ENCODE measurements at regions of chr2 and their contacts with region 1.

Region 1: DNA sequence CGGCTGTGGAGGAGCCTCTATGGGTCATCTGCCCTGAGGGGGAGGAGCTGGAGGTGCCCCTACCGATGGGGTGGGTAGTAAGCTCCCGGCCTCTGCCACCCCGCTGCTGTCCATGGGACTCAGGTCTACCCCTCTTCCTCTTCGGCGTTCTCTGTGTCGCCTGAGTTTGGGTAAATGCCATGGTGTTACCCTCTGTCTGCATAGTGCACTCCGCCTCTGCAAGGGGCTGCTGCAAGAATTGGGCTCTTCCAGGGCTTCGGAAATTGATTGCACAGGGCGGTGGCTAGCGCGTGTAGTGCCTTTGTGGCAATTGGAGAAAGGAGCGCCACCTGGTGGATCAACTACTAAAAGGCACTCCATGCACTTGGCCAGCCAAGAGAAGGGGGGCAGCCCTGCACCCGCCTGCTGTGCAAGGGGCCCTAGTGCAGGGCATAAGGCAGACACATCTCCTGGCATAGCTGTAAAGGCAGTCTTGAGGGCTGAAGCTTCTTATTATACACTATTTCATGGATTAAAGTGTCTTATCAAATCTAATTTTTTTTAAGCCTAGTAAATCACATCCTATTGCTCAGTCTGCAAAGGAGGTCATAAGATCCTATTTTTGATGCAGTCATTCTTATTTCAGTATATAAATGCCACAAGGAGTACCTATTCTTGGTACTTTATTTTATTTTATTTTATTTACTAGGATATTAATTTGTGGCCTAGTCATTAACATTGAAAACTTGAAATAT is 308.9 kb downstream of the PDE11A start:
- DNase-seq: peak; percentile 58
- ATAC-seq: peak; percentile 98
- H3K4me3 ChIP-seq: no peak overlapping the region
- H3K27ac ChIP-seq: no peak overlapping the region
- H3K4me1 ChIP-seq: no peaks in the 10 kb centered on the region
- H3K27me3 ChIP-seq: peaks cover 4% of the 10 kb centered on the region; the same call in 1 of the 2 replicates
- CTCF ChIP-seq: peak; percentile 71
- POLR2A ChIP-seq: no peak
- RAD21 ChIP-seq: peak; percentile 55

Region 2: GRCh38 chr2:175844169-175844568 is 1919.5 kb before region 1 on chr2:
- CTCF ChIA-PET with region 1: no interaction called
- POLR2A ChIA-PET with region 1: no interaction called
- dilution Hi-C with region 1: no loop called
- in situ Hi-C with region 1: no loop called
- intact Hi-C with region 1: loop called (anchors 10 kb)
- DNase-seq: peak; percentile 78
- ATAC-seq: peak; percentile 67
- H3K4me3 ChIP-seq: no peak overlapping the region
- H3K27ac ChIP-seq: no peak overlapping the region
- H3K4me1 ChIP-seq: no peaks in the 10 kb centered on the region; the same call in 1 of the 2 replicates
- H3K27me3 ChIP-seq: no peaks in the 10 kb centered on the region
- CTCF ChIP-seq: no peak
- POLR2A ChIP-seq: no peak
- RAD21 ChIP-seq: no peak

Region 3: DNA sequence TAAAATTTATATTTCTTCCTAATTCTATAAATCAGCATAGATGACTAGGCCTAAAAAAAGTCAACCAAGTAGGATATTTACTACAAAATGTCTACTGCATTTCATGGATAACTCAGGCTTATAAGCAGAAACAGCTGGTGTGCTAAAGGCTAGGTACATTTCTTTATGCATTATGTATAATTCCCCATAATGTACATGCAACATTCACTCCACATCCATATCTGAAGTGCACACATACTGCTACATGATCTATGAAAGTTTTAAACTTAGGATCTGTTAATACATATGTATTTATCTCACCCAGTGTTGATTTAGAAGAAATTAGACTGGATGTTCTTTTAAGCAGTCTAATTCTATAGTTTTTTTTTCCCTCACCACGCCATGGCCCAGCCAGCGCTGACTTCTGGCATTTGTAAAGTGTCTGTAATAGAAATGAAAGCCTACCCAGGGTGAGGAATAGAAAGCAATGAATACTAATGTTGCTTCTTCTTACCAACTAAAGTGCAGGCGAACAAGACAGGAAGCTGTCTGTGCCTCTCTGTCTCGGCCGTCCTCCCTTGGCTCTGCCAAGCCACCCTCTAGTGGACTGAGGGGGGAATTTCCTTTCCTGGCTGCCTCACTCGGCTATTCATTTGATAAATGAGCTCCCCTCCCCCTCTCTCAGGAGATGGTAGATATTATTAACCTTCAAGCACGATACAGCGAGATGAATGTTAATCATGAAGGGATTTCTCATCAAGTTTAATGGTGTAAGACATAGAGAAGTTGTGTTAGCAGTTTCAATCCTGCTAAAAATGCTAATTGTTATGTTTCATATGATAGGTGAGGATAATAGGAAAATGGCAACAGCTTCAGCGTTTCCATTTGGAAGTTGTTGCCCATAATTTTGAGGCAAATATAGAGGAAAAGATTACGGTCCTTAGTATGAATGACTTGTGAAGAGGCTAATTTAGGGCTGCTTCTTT is 1109.9 kb before region 1 on chr2:
- CTCF ChIA-PET with region 1: no interaction called
- POLR2A ChIA-PET with region 1: no interaction called
- dilution Hi-C with region 1: no loop called
- in situ Hi-C with region 1: no loop called
- intact Hi-C with region 1: loop called (anchors 10 kb)
- DNase-seq: peak; percentile 55
- ATAC-seq: peak; percentile 86
- H3K4me3 ChIP-seq: no peak overlapping the region
- H3K27ac ChIP-seq: no peak overlapping the region
- H3K4me1 ChIP-seq: no peaks in the 10 kb centered on the region
- H3K27me3 ChIP-seq: no peaks in the 10 kb centered on the region; the same call in 1 of the 2 replicates
- CTCF ChIP-seq: peak; percentile 59
- POLR2A ChIP-seq: no peak
- RAD21 ChIP-seq: no peak; the same call in 1 of the 2 replicates

Region 4: DNA sequence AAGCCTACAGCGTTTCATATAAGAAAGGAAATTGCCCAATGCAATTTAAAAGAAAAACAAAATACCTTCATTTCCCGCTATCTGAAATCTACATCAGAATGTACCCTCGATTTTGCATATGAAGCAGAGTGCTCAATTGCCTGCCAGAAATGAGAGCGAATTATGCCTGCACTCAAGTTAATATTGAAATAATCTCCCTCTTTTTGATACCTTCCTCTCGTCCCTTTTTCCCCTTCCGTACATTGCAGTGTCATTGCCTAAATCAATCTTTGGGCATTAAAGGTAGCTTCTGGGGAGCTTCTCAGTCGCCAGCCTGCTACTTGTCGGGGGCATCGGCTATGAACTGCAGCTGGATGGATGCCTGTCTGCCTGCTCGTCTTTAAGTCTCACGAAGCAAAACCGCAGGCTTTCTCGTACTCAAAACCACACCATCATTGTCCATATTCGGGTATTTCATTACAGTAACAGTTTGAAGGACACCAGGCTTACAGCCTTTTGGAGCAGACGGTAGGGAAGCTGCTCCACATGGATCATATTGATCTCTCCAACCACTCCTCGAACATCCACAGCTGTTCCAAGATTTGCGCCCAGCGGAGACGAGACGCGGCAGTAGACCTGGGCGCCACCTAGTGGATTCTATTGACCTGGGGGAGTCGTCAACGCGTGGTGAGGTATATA is 615.1 kb before region 1 on chr2:
- CTCF ChIA-PET with region 1: no interaction called
- POLR2A ChIA-PET with region 1: no interaction called
- dilution Hi-C with region 1: no loop called
- in situ Hi-C with region 1: no loop called
- intact Hi-C with region 1: loop called (anchors 5 kb)
- DNase-seq: peak; percentile 66
- ATAC-seq: peak; percentile 99
- H3K4me3 ChIP-seq: peak overlapping the region; percentile 71
- H3K27ac ChIP-seq: no peak overlapping the region
- H3K4me1 ChIP-seq: no peaks in the 10 kb centered on the region
- H3K27me3 ChIP-seq: peaks cover 19% of the 10 kb centered on the region
- CTCF ChIP-seq: peak; percentile 80
- POLR2A ChIP-seq: no peak
- RAD21 ChIP-seq: peak; percentile 43

Region 5: DNA sequence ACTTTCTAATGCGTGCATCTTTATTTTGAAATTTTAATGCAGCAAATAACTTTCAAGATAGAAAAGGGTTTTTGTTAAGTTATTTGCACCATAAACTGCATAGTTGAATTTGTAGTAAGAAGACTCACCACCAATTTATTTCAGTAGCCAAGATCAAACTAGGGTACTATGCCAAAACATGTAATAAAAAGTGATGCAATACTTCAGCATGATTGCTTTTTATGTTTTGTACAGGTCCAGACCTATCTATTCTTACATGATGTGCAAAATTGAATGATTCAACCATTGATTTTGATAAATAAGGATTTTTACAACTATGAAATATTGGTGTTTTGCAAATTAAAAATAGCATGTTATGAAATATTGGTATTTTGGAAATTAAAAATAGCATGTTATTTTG is 344.4 kb before region 1 on chr2:
- CTCF ChIA-PET with region 1: no interaction called
- POLR2A ChIA-PET with region 1: no interaction called
- dilution Hi-C with region 1: no loop called
- in situ Hi-C with region 1: no loop called
- intact Hi-C with region 1: loop called (anchors 5 kb)
- DNase-seq: peak; percentile 61
- ATAC-seq: no peak
- H3K4me3 ChIP-seq: no peak overlapping the region
- H3K27ac ChIP-seq: no peak overlapping the region
- H3K4me1 ChIP-seq: no peaks in the 10 kb centered on the region
- H3K27me3 ChIP-seq: no peaks in the 10 kb centered on the region
- CTCF ChIP-seq: no peak
- POLR2A ChIP-seq: no peak
- RAD21 ChIP-seq: no peak

Region 6: GRCh38 chr2:177489719-177490301 is 273.9 kb before region 1 on chr2:
- CTCF ChIA-PET with region 1: no interaction called
- POLR2A ChIA-PET with region 1: no interaction called
- dilution Hi-C with region 1: no loop called
- in situ Hi-C with region 1: no loop called
- intact Hi-C with region 1: loop called (anchors 1 kb)
- DNase-seq: peak; percentile 49
- ATAC-seq: peak; percentile 72
- H3K4me3 ChIP-seq: no peak overlapping the region
- H3K27ac ChIP-seq: no peak overlapping the region
- H3K4me1 ChIP-seq: no peaks in the 10 kb centered on the region
- H3K27me3 ChIP-seq: no peaks in the 10 kb centered on the region
- CTCF ChIP-seq: peak; percentile 67
- POLR2A ChIP-seq: no peak
- RAD21 ChIP-seq: peak; percentile 63

Region 7: DNA sequence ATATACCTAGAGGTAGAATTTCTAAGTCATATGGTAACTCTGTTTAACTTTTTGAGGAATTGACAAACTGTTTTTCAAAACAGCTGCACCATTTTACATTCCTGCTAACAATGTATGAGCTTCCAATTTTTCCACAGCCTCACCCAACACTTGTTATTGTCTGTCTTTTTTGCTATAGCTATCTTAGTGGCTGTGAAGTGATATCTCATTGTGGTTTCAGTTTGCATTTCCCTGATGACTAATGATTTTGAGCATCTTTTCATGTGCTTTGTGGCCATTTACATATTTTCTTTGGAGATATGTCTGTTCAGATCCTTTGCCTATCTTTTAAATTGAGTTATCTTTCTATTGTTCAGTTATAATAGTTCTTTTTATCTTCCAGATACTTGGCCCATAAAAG is 97.3 kb before region 1 on chr2:
- CTCF ChIA-PET with region 1: no interaction called
- POLR2A ChIA-PET with region 1: no interaction called
- dilution Hi-C with region 1: no loop called
- in situ Hi-C with region 1: no loop called
- intact Hi-C with region 1: no loop called
- DNase-seq: peak; percentile 1
- ATAC-seq: no peak
- H3K4me3 ChIP-seq: no peak overlapping the region
- H3K27ac ChIP-seq: no peak overlapping the region
- H3K4me1 ChIP-seq: no peaks in the 10 kb centered on the region
- H3K27me3 ChIP-seq: no peaks in the 10 kb centered on the region
- CTCF ChIP-seq: no peak
- POLR2A ChIP-seq: no peak
- RAD21 ChIP-seq: no peak

Measured in IMR-90 (cell line).